Endothelial cell of umbilical vein (primary cell): ENCODE measurements at regions of chr12 and their contacts with region 1.

Region 1: GRCh38 chr12:85575120-85576096 is 260.8 kb downstream of the RASSF9 start:
- DNase-seq: peak; percentile 80
- H3K4me3 ChIP-seq: no peak overlapping the region
- H3K27ac ChIP-seq: no peak overlapping the region
- H3K4me1 ChIP-seq: peaks cover 3% of the 10 kb centered on the region
- H3K27me3 ChIP-seq: no peaks in the 10 kb centered on the region
- CTCF ChIP-seq: peak; percentile 62 to 66
- POLR2A ChIP-seq: no peak

Region 2: DNA sequence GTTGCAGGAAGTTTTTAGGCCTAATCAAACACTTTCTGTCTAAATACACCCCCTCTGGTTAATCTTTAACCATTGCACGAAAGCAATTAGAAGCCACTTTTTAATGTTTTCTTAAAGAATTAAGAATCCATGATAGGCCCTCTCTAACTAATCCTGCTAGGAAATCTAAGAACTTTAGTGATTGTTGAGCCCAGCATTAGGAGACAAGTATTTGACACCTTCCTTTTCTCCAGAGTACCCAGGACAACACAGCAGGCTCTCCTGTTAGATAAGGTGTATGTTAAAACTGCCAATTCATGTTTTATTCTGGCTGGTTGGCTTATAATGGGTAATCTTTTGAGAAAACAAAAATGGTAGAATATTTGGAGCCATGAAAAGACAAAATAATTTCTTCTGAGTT is 200.4 kb before region 1 on chr12:
- CTCF ChIA-PET with region 1: no interaction called
- POLR2A ChIA-PET with region 1: no interaction called
- dilution Hi-C with region 1: no loop called
- intact Hi-C with region 1: no loop called
- DNase-seq: no peak
- H3K4me3 ChIP-seq: no peak overlapping the region
- H3K27ac ChIP-seq: no peak overlapping the region
- H3K4me1 ChIP-seq: no peaks in the 10 kb centered on the region
- H3K27me3 ChIP-seq: no peaks in the 10 kb centered on the region
- CTCF ChIP-seq: no peak
- POLR2A ChIP-seq: no peak

Region 3: DNA sequence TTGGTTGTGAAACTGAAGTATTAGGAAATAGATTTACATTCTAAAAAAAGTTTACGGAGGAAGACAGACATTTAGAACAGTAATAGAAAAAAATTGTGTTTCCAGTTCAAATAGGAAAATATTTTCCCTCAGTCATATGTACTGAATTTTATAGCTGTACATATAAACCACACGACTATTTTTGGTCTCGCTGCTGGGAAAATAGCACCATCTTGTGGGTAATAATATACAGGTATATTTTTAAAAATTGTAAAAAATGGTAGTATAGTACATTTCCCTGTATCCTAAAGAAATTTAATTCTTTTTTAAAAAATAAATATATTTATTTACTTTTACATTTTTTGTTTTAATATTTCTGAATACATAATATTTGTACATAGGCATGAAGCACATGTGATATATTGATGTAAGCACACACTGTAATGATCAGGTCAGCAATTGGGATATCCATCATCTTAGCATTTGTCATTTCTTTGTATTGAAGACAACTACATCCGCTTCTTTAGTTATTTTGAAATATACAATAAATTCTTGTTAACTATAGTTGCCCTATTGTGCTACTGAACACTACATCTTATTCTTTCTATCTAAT is 126.8 kb before region 1 on chr12:
- CTCF ChIA-PET with region 1: no interaction called
- POLR2A ChIA-PET with region 1: no interaction called
- dilution Hi-C with region 1: no loop called
- intact Hi-C with region 1: no loop called
- DNase-seq: peak; percentile 42
- H3K4me3 ChIP-seq: no peak overlapping the region
- H3K27ac ChIP-seq: no peak overlapping the region
- H3K4me1 ChIP-seq: no peaks in the 10 kb centered on the region
- H3K27me3 ChIP-seq: no peaks in the 10 kb centered on the region
- CTCF ChIP-seq: no peak
- POLR2A ChIP-seq: no peak

Region 4: DNA sequence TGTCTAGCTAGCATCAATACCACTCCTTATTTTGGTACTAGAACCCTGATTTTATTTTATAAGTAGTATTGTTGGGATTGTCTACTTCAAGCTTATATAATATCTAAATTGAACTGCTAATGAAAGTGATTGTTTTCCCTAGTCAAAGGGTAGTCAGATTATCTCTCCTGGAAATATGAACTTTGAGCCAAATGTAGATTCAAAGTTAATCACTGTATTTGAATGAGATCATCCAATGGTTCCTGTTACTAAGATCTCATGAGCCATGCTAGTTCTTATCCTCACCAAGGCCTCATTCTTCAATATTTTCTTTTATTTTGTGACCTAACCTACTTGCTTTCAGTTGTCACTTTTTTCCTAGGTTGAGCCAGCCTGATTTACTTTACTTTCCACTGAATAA is 15.9 kb before region 1 on chr12:
- CTCF ChIA-PET with region 1: interaction called, 26 read pairs
- POLR2A ChIA-PET with region 1: no interaction called
- dilution Hi-C with region 1: no loop called
- intact Hi-C with region 1: no loop called
- DNase-seq: no peak
- H3K4me3 ChIP-seq: no peak overlapping the region
- H3K27ac ChIP-seq: no peak overlapping the region
- H3K4me1 ChIP-seq: no peaks in the 10 kb centered on the region
- H3K27me3 ChIP-seq: no peaks in the 10 kb centered on the region
- CTCF ChIP-seq: no peak
- POLR2A ChIP-seq: no peak

Region 5: GRCh38 chr12:85781766-85782165 is 206.4 kb after region 1 on chr12:
- CTCF ChIA-PET with region 1: interaction called, 15 read pairs
- POLR2A ChIA-PET with region 1: no interaction called
- dilution Hi-C with region 1: no loop called
- intact Hi-C with region 1: no loop called
- DNase-seq: no peak
- H3K4me3 ChIP-seq: no peak overlapping the region
- H3K27ac ChIP-seq: no peak overlapping the region
- H3K4me1 ChIP-seq: no peaks in the 10 kb centered on the region
- H3K27me3 ChIP-seq: no peaks in the 10 kb centered on the region
- CTCF ChIP-seq: no peak
- POLR2A ChIP-seq: no peak

Region 6: GRCh38 chr12:85836197-85837090 is 261.0 kb after region 1 on chr12 and contains the start of gene RASSF9:
- CTCF ChIA-PET with region 1: interaction called, 18 read pairs
- POLR2A ChIA-PET with region 1: no interaction called
- dilution Hi-C with region 1: no loop called
- intact Hi-C with region 1: no loop called
- DNase-seq: peak; percentile 84
- H3K4me3 ChIP-seq: peak within 1 kb of the TSS; percentile 5 to 89 (median 39)
- H3K27ac ChIP-seq: peak within 1 kb of the TSS; percentile 49
- H3K4me1 ChIP-seq: peaks cover 15% of the 10 kb centered on the region
- H3K27me3 ChIP-seq: no peaks in the 10 kb centered on the region
- CTCF ChIP-seq: no peak
- POLR2A ChIP-seq: no peak
- total RNA-seq, gene RASSF9: 2.3 and 3.6 TPM in 2 replicates

Region 7: DNA sequence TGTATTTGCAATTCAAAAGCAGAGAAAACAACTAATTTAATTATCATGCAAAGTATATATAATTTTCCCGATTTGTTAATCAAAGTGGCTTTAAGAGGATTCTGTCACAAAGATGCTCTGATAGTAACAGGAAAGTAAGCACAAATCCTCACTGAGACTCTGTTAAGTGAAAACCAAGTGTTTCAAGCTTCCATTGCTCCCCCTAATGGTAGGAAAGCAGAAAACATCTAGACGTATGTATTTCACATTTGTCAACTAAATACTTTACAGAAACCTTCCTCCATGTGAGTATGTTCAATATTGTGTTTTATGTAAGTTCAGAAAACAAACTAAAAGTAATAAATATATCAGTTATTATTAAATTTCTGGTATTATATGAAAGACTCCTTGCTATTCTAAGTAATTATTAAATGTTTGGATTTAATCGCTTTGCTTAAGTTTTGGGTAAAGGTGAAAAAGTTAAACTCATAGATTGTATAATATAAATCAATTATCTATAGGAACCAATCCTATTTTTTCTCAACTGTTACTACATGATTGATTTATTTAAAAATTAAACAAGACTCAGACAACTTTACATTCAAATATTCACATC is 297.2 kb after region 1 on chr12:
- CTCF ChIA-PET with region 1: interaction called, 437 read pairs
- POLR2A ChIA-PET with region 1: no interaction called
- dilution Hi-C with region 1: no loop called
- intact Hi-C with region 1: loop called (anchors 1 kb)
- DNase-seq: peak; percentile 66
- H3K4me3 ChIP-seq: no peak overlapping the region
- H3K27ac ChIP-seq: no peak overlapping the region
- H3K4me1 ChIP-seq: no peaks in the 10 kb centered on the region
- H3K27me3 ChIP-seq: no peaks in the 10 kb centered on the region
- CTCF ChIP-seq: peak; percentile 46 to 52
- POLR2A ChIP-seq: no peak